Naive thymus-derived CD8-positive, alpha-beta T cell (primary cell): ENCODE measurements at regions of chr22 and their contacts with region 1.

Region 1: GRCh38 chr22:38681784-38682335 is at the start of gene TOMM22:
- DNase-seq: peak; percentile 67 to 89 (median 80)
- ATAC-seq: peak; percentile 94
- H3K4me3 Mint-ChIP-seq: peak within 1 kb of the TSS; percentile 88 to 99 (median 98)
- H3K27ac Mint-ChIP-seq: peak within 1 kb of the TSS; percentile 94 to 99 (median 99)
- H3K4me1 Mint-ChIP-seq: peaks cover 13 to 24% (median 18%) of the 10 kb centered on the region in 4 donors
- H3K27me3 Mint-ChIP-seq: no peaks in the 10 kb centered on the region
- polyA plus RNA-seq, gene TOMM22: 67.2 to 79.3 (median 75.9) TPM

Region 2: DNA sequence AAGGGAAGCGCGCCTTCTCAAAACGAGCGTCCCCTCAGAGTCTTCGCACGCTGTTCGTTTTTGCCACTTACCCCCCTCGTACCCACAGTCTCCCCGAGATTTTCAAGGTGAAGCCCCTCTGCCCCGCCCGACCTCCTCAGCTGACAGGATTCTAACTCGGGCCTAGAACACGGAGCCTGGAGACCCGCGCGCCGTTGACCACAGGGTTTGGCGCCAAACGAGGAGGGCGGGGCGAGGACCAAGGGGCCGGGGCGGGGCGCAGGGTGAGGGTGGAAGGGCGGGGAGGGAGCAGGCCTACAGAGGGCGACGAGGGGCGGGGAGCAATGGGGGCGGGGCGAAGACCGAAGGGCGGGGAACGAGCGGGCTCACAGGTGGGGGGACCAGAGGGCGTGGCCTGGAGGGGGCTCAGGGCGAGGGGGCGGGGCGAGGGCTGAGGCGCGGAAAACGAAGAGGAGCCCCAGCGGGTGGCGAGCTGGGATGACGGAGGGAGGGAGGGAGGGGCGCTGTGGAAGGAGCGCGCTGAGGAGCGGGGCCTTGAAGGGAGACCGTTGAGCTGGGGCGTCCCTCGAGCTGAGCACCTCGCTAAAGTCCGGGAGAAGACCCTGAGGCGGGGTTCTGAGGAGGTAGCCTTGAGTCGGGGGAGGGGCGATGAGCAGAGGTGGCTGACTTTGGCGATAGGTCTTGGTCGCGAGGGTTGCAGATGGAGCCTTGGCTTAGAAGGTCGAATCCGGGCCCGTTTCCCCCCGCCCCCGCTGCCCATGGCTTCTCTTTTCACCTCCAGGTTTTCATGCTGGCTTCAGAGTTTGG is 111.7 kb before region 1 on chr22 and contains the start of gene DMC1:
- POLR2A ChIA-PET with region 1: interaction called, 10 read pairs
- DNase-seq: peak; percentile 82 to 99 (median 92)
- ATAC-seq: peak; percentile 84 to 89
- H3K4me3 Mint-ChIP-seq: peak within 1 kb of the TSS; percentile 84 to 96 (median 91)
- H3K27ac Mint-ChIP-seq: peak within 1 kb of the TSS; percentile 34 to 95 (median 90)
- H3K4me1 Mint-ChIP-seq: peaks cover 12 to 19% (median 18%) of the 10 kb centered on the region in 4 donors
- H3K27me3 Mint-ChIP-seq: no peaks in the 10 kb centered on the region
- polyA plus RNA-seq, gene DMC1: not detected

Region 3: DNA sequence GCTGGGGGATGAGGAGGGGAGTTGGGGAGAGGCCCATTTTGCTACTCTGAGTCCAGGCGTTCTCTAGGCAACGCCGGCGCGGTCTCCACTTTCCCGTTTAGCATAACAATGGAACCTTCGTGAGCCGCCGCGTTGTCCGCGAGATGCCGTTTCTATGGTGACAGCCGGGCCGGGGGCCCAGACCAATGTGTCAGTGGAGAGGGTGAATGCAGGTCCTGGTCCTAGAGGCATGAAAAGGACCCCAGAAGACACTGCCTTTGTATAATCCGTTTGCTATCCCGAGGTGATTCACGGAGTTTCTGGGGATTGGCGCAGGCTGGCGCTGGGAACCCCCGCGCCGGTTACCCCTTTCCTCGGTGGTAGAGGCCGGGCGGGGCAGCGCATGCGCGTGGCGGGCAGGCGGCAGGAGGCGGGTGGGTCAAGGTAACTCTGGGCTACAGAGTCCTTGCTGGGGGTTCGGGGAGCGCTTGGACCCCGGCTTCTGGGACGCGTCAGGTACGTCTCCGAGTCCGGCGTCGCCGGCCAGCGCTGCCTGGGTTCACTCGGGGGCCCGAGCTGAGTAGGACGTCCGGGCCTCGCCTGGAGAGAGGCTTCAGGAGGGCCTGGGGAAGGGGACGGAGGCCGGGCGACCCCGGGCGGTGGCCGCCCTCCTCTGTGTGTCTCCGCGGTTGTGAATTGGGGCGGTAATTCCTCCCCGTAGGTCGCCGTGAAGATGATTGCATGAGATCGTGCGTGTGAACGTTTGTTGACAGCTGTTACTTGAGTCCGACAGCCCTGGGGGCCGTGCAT is 25.4 kb before region 1 on chr22 and contains the starts of genes CBY1 and FAM227A:
- POLR2A ChIA-PET with region 1: interaction called, 18 read pairs
- DNase-seq: peak; percentile 73 to 98 (median 87)
- ATAC-seq: peak; percentile 82 to 83
- H3K4me3 Mint-ChIP-seq: peak within 1 kb of the TSS; percentile 90 to 99 (median 96)
- H3K27ac Mint-ChIP-seq: peak within 1 kb of the TSS; percentile 93 to 100 (median 99)
- H3K4me1 Mint-ChIP-seq: peaks cover 6 to 23% (median 14%) of the 10 kb centered on the region in 4 donors
- H3K27me3 Mint-ChIP-seq: no peaks in the 10 kb centered on the region
- polyA plus RNA-seq, gene CBY1: 4.3 to 11.6 (median 11.2) TPM
- polyA plus RNA-seq, gene FAM227A: not detected

Region 4: DNA sequence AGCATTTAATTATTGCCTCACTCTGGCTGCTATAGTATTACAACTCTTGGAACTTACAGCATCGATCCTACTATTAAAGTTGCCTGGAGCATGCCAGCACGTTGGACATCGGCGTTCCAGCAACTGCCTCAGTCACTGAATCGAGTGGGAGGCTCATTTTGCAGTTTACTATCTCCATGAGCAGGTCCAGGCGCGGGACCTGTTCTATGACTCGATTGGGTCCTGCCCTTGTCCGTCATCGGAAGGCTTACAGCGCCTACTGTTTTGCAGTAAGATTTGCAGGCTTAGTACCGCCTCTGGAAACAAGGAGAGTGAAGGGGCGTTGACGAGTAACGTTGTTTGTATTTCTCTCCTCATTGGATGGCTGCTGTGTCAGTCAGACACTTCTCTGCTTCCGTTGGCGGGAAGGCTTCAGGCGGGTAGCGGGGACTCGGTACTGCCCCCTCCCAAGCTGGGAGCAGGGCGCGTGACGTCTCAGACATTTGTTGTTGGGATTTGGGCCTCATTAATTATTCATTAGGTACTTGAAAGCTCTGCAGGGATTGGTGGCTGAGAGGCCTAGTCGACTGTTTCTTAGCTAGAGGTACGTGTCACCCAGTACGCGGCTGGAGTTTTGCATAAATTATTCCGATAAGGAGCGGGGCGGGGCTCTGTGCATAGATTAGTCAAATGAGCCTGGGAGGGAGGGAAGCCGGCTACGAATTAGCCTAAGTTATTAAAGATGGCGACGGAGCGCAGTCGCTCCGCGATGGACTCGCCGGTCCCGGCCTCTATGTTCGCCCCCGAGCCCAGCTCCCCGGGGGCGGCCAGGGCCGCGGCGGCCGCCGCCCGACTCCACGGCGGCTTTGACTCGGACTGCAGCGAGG is 23.6 kb after region 1 on chr22 and contains the start of gene GTPBP1:
- POLR2A ChIA-PET with region 1: interaction called, 51 read pairs
- DNase-seq: peak; percentile 87 to 99 (median 98)
- ATAC-seq: peak; percentile 78 to 79
- H3K4me3 Mint-ChIP-seq: peak within 1 kb of the TSS; percentile 85 to 95 (median 90)
- H3K27ac Mint-ChIP-seq: peak within 1 kb of the TSS; percentile 83 to 99 (median 98)
- H3K4me1 Mint-ChIP-seq: peaks cover 26 to 66% (median 60%) of the 10 kb centered on the region in 4 donors
- H3K27me3 Mint-ChIP-seq: peaks cover 0 to 3% (median 0%) of the 10 kb centered on the region in 5 donors
- polyA plus RNA-seq, gene GTPBP1: 17.2 to 29.3 (median 22.6) TPM

Region 5: DNA sequence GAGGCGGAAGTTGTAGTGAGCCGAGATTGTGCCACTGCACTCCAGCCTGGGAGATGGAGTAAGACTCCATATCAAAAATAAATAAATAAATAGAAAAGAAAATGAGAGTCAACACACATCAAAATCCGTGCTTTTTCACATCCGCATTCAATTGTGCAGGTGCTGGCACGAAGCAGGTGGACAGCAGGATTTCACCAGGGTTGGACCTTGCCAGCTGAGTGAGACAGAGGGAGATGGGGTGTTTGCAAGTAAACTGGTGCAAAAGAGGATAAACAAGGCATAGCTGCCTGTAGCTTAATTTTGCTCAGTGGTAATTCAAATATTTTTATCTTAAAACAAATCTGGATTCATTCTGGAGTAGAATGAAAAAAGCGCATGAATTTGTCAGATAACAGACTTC is 135.3 kb after region 1 on chr22:
- POLR2A ChIA-PET with region 1: no interaction called
- DNase-seq: no peak
- ATAC-seq: no peak
- H3K4me3 Mint-ChIP-seq: no peak overlapping the region
- H3K27ac Mint-ChIP-seq: no peak overlapping the region
- H3K4me1 Mint-ChIP-seq: no peaks in the 10 kb centered on the region
- H3K27me3 Mint-ChIP-seq: peaks cover 0 to 14% (median 0%) of the 10 kb centered on the region in 5 donors